B cell (primary cell): ENCODE measurements at regions of chr2 and their contacts with region 1.

Region 1: DNA sequence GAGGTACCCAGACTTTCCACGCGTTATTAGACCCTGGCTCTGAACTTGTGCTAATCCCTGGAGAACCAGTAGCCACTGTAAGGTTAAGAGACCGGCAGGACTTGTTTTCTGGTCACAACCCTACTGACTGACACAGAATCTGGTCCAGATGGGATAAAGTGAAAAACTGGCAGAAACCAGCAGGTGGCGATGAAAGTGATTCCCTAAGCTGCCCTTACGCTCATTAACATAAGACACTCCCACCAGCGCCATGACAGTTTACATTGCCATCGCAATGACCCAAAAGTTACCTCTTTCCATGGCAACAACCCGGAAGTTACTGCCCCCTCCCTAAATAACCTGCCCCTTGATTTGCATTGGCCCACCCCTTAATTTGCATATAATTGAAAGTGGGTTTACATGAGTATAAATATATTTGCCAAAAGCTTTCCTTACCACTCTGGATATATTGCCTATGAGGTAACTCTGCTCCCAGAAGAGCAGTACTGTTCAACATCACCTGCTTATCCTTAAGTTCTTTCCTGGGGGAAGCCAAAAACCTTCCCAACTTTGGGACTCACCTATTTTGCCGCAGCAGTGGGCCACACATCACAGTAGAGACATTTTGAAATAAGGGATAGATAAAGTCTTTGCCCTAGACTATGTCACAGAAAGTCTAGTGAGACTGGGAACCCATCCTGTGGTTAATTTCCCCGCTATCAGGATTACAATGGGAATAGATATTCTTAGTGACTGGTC is 35.8 kb upstream of the AFF3 start:
- DNase-seq: peak; percentile 66
- ATAC-seq: peak; percentile 73
- H3K4me3 ChIP-seq: no peak overlapping the region
- H3K4me3 Mint-ChIP-seq: no peak overlapping the region
- H3K27ac ChIP-seq: no peak overlapping the region
- H3K27ac Mint-ChIP-seq: peak overlapping the region; percentile 27
- H3K4me1 ChIP-seq: peaks cover 3 to 9% of the 10 kb centered on the region in 2 donors
- H3K4me1 Mint-ChIP-seq: peaks cover 20% of the 10 kb centered on the region
- H3K27me3 ChIP-seq: no peaks in the 10 kb centered on the region
- H3K27me3 Mint-ChIP-seq: no peaks in the 10 kb centered on the region
- CTCF ChIP-seq: peak; percentile 53

Region 2: GRCh38 chr2:100214265-100214971 is 36.2 kb after region 1 on chr2:
- CTCF ChIA-PET with region 1: no interaction called
- POLR2A ChIA-PET with region 1: no interaction called
- intact Hi-C with region 1: loop called (anchors 5 kb)
- DNase-seq: no peak
- ATAC-seq: no peak
- H3K4me3 ChIP-seq: no peak overlapping the region
- H3K4me3 Mint-ChIP-seq: no peak overlapping the region
- H3K27ac ChIP-seq: no peak overlapping the region
- H3K27ac Mint-ChIP-seq: no peak overlapping the region
- H3K4me1 ChIP-seq: peaks cover 0 to 4% of the 10 kb centered on the region in 2 donors
- H3K4me1 Mint-ChIP-seq: peaks cover 5% of the 10 kb centered on the region
- H3K27me3 ChIP-seq: no peaks in the 10 kb centered on the region
- H3K27me3 Mint-ChIP-seq: peaks cover 10% of the 10 kb centered on the region
- CTCF ChIP-seq: no peak

Region 3: DNA sequence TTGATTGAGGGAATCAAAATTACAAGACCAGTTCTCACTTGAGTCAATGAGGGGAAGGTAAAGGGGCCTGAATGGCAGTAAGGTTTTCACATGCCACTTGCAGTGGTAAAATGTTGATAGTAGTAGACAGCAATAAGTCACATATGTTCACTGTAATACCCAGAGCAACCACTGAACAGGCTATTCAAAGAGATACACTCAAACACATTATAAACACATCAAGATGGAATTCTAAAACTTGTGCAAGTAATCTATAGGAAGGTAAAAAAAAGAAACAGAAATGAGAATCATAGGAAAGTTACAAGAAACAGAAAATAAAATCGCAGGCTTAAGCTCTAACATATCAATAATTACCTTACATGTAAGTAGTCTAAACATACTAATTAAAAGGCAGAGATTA is 50.7 kb after region 1 on chr2:
- CTCF ChIA-PET with region 1: no interaction called
- POLR2A ChIA-PET with region 1: no interaction called
- intact Hi-C with region 1: no loop called
- DNase-seq: no peak
- ATAC-seq: peak; percentile 28
- H3K4me3 ChIP-seq: no peak overlapping the region
- H3K4me3 Mint-ChIP-seq: no peak overlapping the region
- H3K27ac ChIP-seq: no peak overlapping the region
- H3K27ac Mint-ChIP-seq: no peak overlapping the region
- H3K4me1 ChIP-seq: peaks cover 7 to 12% of the 10 kb centered on the region in 2 donors
- H3K4me1 Mint-ChIP-seq: peaks cover 32% of the 10 kb centered on the region
- H3K27me3 ChIP-seq: no peaks in the 10 kb centered on the region
- H3K27me3 Mint-ChIP-seq: peaks cover 11% of the 10 kb centered on the region
- CTCF ChIP-seq: no peak

Region 4: GRCh38 chr2:100272841-100273329 is 94.7 kb after region 1 on chr2:
- CTCF ChIA-PET with region 1: no interaction called
- POLR2A ChIA-PET with region 1: no interaction called
- intact Hi-C with region 1: no loop called
- DNase-seq: no peak
- ATAC-seq: no peak
- H3K4me3 ChIP-seq: no peak overlapping the region
- H3K4me3 Mint-ChIP-seq: no peak overlapping the region
- H3K27ac ChIP-seq: no peak overlapping the region
- H3K27ac Mint-ChIP-seq: no peak overlapping the region
- H3K4me1 ChIP-seq: peaks cover 0 to 5% of the 10 kb centered on the region in 2 donors
- H3K4me1 Mint-ChIP-seq: peaks cover 10% of the 10 kb centered on the region
- H3K27me3 ChIP-seq: no peaks in the 10 kb centered on the region
- H3K27me3 Mint-ChIP-seq: peaks cover 3% of the 10 kb centered on the region
- CTCF ChIP-seq: no peak